ENCODE measurements at regions of chr6 and their contacts with region 1.

Region 1: DNA sequence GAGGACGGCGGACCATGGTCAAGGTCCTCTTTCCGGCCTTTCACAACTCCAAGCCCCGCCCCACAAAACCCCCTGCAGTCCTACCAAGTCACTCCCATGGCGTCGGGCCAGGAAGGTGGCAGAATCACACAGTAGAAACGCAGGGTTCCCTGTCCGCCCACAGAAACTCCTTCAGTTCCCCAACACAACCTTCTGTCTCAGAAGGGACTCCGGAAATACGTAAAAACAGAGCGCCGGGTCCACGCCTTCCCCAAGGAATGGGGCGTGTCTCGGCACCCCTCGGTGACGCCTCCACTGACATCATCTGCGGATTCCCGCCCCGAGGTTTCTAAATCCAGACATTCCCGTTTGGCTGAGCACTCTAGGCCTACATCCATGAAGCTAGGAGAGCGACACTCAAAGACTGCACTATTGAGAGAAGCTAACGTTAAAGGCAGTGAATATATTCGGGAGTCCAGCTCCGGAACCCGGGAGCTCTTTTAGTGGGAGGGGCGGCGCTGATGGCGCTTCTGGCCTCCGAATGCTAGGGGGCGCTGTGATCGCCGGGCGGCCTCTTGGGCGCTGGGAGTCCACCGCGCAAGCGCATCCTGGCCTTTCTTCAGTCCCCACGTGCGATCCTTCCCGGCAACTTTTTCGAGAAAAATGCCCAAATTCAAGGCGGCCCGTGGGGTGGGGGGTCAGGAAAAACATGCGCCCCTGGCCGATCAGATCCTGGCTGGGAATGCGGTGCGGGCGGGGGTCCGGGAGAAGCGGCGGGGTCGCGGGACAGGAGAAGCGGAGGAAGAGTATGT is at the starts of genes BYSL and MED20:
- DNase-seq: peak; percentile 95
- H3K4me3 ChIP-seq: peak within 1 kb of the TSS; percentile 55 to 99
- H3K27ac ChIP-seq: peak within 1 kb of the TSS; percentile 96 to 99
- H3K4me1 ChIP-seq: peaks cover 14 to 18% of the 10 kb centered on the region in 2 experiments; a peak in 3 of 4 replicates
- H3K27me3 ChIP-seq: no peaks in the 10 kb centered on the region
- CTCF ChIP-seq: peak; percentile 97
- EP300 ChIP-seq: no peak
- RAD21 ChIP-seq: no peak; the same call in 1 of the 2 replicates
- polyA plus RNA-seq, gene BYSL: 31.1 and 56.0 TPM in 2 replicates
- polyA plus RNA-seq, gene MED20: 25.1 and 29.6 TPM in 2 replicates

Region 2: GRCh38 chr6:41757931-41758563 is 163.1 kb before region 1 on chr6:
- CTCF ChIA-PET with region 1: no interaction called
- POLR2A ChIA-PET with region 1: no interaction called
- DNase-seq: no peak
- H3K4me3 ChIP-seq: no peak overlapping the region
- H3K27ac ChIP-seq: no peak overlapping the region
- H3K4me1 ChIP-seq: peaks cover 0 to 6% of the 10 kb centered on the region in 2 experiments; a peak in 1 of 4 replicates
- H3K27me3 ChIP-seq: no peaks in the 10 kb centered on the region
- CTCF ChIP-seq: no peak
- EP300 ChIP-seq: no peak
- RAD21 ChIP-seq: no peak

Region 3: GRCh38 chr6:41895300-41896233 is 25.5 kb before region 1 on chr6 and contains the start of gene USP49:
- CTCF ChIA-PET with region 1: interaction called, 13 read pairs
- POLR2A ChIA-PET with region 1: interaction called, 3 read pairs
- DNase-seq: peak; percentile 97
- H3K4me3 ChIP-seq: peak within 1 kb of the TSS; percentile 83 to 94
- H3K27ac ChIP-seq: peak within 1 kb of the TSS; percentile 79 to 82
- H3K4me1 ChIP-seq: peaks cover 5 to 12% of the 10 kb centered on the region in 2 experiments; a peak in 2 of 4 replicates
- H3K27me3 ChIP-seq: no peaks in the 10 kb centered on the region
- CTCF ChIP-seq: no peak
- EP300 ChIP-seq: no peak
- RAD21 ChIP-seq: no peak
- polyA plus RNA-seq, gene USP49: 2.4 and 3.7 TPM in 2 replicates

Region 4: DNA sequence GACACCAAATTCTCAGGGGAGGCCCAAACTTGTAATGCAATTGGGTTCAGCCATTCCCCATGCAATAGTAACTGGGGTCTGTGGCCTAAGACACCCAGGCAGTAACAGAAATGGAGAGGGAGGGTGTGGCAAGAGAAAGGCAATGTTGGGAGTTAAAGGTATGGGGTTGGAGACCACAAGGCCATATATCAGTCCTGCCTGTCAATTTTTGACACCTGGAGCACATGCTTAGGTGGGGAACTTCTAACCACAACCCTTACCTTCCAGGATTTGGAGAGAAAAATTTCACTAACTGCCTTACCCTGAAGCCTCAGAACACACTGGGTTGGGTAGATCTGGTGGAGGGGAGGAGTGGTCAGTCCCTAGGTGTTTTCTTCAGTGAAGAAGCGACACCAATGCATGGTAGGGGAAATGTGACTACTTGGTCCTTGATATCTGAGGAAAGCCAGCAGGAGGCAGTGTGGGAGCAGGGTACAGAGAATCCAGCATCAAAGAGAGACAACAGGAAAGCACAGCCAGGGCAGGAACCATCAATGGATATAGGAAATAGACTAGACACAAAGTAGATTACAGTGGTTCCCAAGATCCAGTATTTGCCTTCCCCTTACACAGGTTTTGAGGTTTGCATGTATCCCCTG is 19.1 kb before region 1 on chr6:
- CTCF ChIA-PET with region 1: interaction called, 16 read pairs
- POLR2A ChIA-PET with region 1: no interaction called
- DNase-seq: no peak
- H3K4me3 ChIP-seq: no peak overlapping the region
- H3K27ac ChIP-seq: no peak overlapping the region
- H3K4me1 ChIP-seq: no peaks in the 10 kb centered on the region
- H3K27me3 ChIP-seq: no peaks in the 10 kb centered on the region
- CTCF ChIP-seq: peak; percentile 41
- EP300 ChIP-seq: no peak
- RAD21 ChIP-seq: peak; percentile 23; the same call in 1 of the 2 replicates

Region 5: DNA sequence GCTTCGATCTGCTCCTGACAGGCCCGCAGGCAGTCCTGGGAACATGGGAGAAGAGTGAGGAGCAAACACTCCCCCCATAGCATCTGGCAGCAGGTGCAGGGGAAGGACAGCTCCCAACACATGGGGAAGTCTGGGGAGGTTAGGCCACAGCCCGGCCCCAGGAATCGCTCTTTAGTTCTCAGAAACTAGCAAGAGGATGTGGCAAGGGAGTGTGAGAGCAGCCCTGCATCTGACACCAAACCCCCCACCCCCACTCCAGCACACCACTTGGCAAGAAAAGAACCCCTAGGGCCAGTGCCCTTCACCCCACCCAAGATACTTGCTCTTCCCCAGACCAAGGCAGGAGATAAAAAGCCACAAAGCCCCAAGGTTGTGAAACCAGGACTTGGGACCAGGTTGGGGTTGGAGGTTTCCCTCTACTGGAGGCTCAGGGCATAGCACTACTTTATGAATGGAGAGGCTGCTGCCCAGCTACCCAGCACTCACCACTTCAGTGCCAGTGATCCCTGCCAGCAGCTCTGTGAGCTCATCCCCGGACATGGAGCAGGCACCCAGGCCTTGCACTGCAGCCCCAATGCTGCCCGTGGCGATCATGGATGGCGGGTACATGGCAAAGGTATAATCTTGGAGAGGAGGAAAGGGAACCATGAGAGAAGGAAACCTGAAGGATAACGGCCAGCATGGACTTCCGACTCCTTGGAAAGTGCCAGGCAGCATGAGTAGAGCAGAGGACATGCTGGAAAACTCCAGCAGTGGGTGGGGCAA is 15.1 kb after region 1 on chr6:
- CTCF ChIA-PET with region 1: interaction called, 70 read pairs
- POLR2A ChIA-PET with region 1: interaction called, 7 read pairs
- DNase-seq: peak; percentile 83
- H3K4me3 ChIP-seq: peak overlapping the region in 1 of 2 experiments; percentile 14; a peak in 1 of 4 replicates
- H3K27ac ChIP-seq: peak overlapping the region; percentile 46 to 50; a peak in 3 of 4 replicates
- H3K4me1 ChIP-seq: peaks cover 19 to 22% of the 10 kb centered on the region in 2 experiments; a peak in 3 of 4 replicates
- H3K27me3 ChIP-seq: no peaks in the 10 kb centered on the region
- CTCF ChIP-seq: peak; percentile 79
- EP300 ChIP-seq: no peak
- RAD21 ChIP-seq: peak; percentile 72

Region 6: GRCh38 chr6:42075159-42075838 is 154.2 kb after region 1 on chr6:
- CTCF ChIA-PET with region 1: no interaction called
- POLR2A ChIA-PET with region 1: no interaction called
- DNase-seq: peak; percentile 78
- H3K4me3 ChIP-seq: no peak overlapping the region; a peak in 1 of 4 replicates
- H3K27ac ChIP-seq: no peak overlapping the region
- H3K4me1 ChIP-seq: no peaks in the 10 kb centered on the region
- H3K27me3 ChIP-seq: no peaks in the 10 kb centered on the region
- CTCF ChIP-seq: peak; percentile 94
- EP300 ChIP-seq: no peak
- RAD21 ChIP-seq: peak; percentile 93

Measured in SK-N-SH (cell line).